Tibial artery (tissue), 4 donors: ENCODE measurements at regions of chr12 and their contacts with region 1.

Region 1: GRCh38 chr12:133037207-133038005 is at the start of gene ZNF84:
- DNase-seq: peak; percentile 95 to 98
- H3K4me3 ChIP-seq: peak within 1 kb of the TSS; percentile 80 to 93
- H3K27ac ChIP-seq: peak within 1 kb of the TSS; percentile 95 to 96
- H3K4me1 ChIP-seq: peaks cover 0 to 9% (median 6%) of the 10 kb centered on the region in 4 donors
- H3K27me3 ChIP-seq: no peaks in the 10 kb centered on the region
- CTCF ChIP-seq: no peak

Region 2: GRCh38 chr12:132986001-132986912 is 51.1 kb before region 1 on chr12 and contains the start of gene ZNF26:
- intact Hi-C with region 1: loop called (anchors 2 kb)
- DNase-seq: peak; percentile 87 to 93
- H3K4me3 ChIP-seq: peak within 1 kb of the TSS; percentile 82 to 96
- H3K27ac ChIP-seq: peak within 1 kb of the TSS; percentile 80 to 84
- H3K4me1 ChIP-seq: peaks cover 0 to 21% (median 10%) of the 10 kb centered on the region in 4 donors
- H3K27me3 ChIP-seq: no peaks in the 10 kb centered on the region
- CTCF ChIP-seq: no peak

Region 3: DNA sequence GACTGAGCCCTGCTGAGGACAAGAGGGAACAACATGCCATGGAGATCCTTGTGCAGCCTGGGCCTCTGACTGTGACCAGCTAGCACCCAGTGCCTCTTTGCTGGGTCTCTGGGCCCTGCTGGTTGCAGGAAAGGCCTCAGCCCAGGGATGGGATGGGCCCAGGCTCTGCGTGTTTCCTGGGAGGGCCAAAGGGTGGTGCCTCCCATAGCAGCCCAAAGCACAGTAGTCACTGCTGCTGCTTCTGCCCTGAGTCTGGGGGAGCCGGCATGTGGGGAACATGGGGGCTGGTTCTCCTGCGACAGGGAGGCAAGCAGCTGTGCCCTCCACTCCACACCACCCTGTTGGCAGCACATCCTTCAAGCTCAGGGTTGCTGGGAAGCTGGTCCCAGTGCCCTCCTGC is 179.8 kb after region 1 on chr12:
- intact Hi-C with region 1: no loop called
- DNase-seq: peak in 1 of 2 donors; percentile 61
- H3K4me3 ChIP-seq: no peak overlapping the region
- H3K27ac ChIP-seq: no peak overlapping the region
- H3K4me1 ChIP-seq: no peaks in the 10 kb centered on the region
- H3K27me3 ChIP-seq: no peaks in the 10 kb centered on the region
- CTCF ChIP-seq: no peak